A673 (cell line): ENCODE measurements at regions of chr20 and their contacts with region 1.

Region 1: DNA sequence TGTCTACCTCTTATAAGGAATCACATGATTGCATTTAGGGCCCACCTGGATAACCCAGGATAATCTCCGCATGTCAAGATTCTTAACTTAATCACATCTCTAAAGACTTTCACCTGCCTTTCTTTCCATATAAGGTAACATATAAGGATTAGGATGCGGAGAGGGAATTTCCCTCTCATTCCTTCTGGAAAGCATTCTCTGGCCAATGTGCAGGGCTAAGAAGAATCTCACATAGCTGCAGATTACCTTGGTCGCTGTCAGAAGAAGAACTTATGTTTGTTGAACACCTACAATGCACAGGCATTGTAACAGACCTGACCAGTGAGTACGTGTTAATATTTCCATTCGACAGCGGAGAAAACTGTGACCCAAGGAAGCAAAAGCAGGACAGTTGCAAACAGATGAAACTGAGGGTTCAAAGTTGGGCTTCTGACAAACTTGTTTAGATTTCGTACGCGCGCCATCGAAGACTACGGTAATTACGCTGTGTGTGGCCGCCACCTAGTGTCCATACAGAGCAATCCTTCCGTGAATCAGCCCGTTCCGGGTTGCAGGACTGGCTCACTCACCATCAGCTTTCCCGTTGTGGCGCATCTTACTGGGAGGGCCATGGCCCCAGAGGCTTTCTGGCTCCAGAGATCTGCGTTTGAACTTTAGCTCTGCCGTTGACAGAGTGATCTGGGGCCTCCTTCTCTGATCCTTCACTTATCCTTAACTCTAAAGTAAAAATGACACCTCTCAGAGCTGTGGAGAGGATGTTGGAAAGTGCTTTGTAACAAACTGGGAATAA is 9.5 kb downstream of the C20orf202 start:
- DNase-seq: peak; percentile 84
- H3K4me3 ChIP-seq: no peak overlapping the region
- H3K27ac ChIP-seq: no peak overlapping the region
- H3K4me1 ChIP-seq: peaks cover 5% of the 10 kb centered on the region
- H3K27me3 ChIP-seq: no peaks in the 10 kb centered on the region
- CTCF ChIP-seq: peak; percentile 87

Region 2: DNA sequence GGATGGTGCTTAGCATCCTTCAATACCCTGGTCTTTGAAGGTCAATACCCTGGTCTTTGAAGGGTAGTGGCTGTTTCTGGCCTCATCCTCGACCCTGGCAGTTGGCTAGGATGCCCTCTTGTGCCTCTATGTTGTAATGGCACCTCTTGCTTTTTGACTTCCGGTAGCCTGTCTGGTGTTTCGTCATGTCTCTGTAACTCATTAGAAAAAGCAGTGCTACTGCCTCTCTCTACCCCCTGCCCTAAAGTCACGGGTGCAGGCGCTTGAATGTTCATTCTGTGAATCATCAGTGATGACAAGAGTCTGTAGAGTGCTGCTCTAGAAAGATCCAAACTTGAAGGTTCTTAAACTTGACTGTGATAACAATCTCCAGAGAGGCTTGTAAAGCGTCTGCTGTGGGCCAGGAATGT is 239.0 kb before region 1 on chr20:
- CTCF ChIA-PET with region 1: no interaction called
- POLR2A ChIA-PET with region 1: no interaction called
- intact Hi-C with region 1: loop called (anchors 10 kb)
- DNase-seq: peak; percentile 59
- H3K4me3 ChIP-seq: no peak overlapping the region
- H3K27ac ChIP-seq: no peak overlapping the region
- H3K4me1 ChIP-seq: no peaks in the 10 kb centered on the region
- H3K27me3 ChIP-seq: peaks cover 2% of the 10 kb centered on the region
- CTCF ChIP-seq: peak; percentile 59

Region 3: GRCh38 chr20:1108437-1108920 is 104.3 kb before region 1 on chr20:
- CTCF ChIA-PET with region 1: interaction called, 4 read pairs
- POLR2A ChIA-PET with region 1: no interaction called
- intact Hi-C with region 1: loop called (anchors 5 kb)
- DNase-seq: peak; percentile 58
- H3K4me3 ChIP-seq: no peak overlapping the region
- H3K27ac ChIP-seq: no peak overlapping the region
- H3K4me1 ChIP-seq: no peaks in the 10 kb centered on the region
- H3K27me3 ChIP-seq: no peaks in the 10 kb centered on the region
- CTCF ChIP-seq: peak; percentile 82